IMR-90 (cell line): ENCODE measurements at regions of chr7 and their contacts with region 1.

Region 1: GRCh38 chr7:131654668-131655326 is 98.4 kb upstream of the PODXL start:
- DNase-seq: peak; percentile 72
- ATAC-seq: peak; percentile 100
- H3K4me3 ChIP-seq: no peak overlapping the region
- H3K27ac ChIP-seq: no peak overlapping the region
- H3K4me1 ChIP-seq: no peaks in the 10 kb centered on the region
- H3K27me3 ChIP-seq: peaks cover 2% of the 10 kb centered on the region; the same call in 1 of the 2 replicates
- CTCF ChIP-seq: peak; percentile 94
- POLR2A ChIP-seq: peak; percentile 47
- RAD21 ChIP-seq: peak; percentile 96

Region 2: DNA sequence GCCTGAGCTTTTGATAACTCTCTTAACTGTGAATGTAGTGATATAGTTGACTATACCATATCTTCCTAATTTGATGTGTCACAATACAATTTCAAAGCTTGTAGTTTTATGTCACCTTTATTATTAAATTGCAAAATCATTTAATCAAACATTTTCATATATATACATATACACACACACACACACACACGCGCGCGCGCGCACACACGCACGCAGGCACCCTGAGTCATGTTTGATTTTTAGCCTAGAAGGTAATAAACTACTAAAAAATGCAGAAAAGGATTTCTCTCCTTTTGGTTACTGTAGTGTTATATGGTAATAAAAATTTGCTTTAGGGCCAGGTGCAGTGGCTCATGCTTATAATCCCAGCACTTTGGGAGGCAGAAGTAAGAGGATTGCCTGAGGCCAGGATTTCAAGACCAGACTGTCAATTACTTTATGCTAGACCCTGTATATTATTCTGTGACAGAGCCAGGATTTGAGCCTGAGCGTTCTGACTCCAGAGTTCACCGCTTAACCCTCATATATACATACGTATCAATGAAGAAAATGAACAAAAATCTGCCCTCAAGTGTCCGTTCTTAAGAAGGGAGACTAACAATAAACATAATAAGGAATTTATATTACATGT is 187.9 kb before region 1 on chr7:
- CTCF ChIA-PET with region 1: no interaction called
- POLR2A ChIA-PET with region 1: no interaction called
- dilution Hi-C with region 1: no loop called
- in situ Hi-C with region 1: no loop called
- intact Hi-C with region 1: no loop called
- DNase-seq: no peak
- ATAC-seq: no peak
- H3K4me3 ChIP-seq: no peak overlapping the region
- H3K27ac ChIP-seq: no peak overlapping the region
- H3K4me1 ChIP-seq: no peaks in the 10 kb centered on the region
- H3K27me3 ChIP-seq: no peaks in the 10 kb centered on the region
- CTCF ChIP-seq: no peak
- POLR2A ChIP-seq: no peak
- RAD21 ChIP-seq: no peak

Region 3: DNA sequence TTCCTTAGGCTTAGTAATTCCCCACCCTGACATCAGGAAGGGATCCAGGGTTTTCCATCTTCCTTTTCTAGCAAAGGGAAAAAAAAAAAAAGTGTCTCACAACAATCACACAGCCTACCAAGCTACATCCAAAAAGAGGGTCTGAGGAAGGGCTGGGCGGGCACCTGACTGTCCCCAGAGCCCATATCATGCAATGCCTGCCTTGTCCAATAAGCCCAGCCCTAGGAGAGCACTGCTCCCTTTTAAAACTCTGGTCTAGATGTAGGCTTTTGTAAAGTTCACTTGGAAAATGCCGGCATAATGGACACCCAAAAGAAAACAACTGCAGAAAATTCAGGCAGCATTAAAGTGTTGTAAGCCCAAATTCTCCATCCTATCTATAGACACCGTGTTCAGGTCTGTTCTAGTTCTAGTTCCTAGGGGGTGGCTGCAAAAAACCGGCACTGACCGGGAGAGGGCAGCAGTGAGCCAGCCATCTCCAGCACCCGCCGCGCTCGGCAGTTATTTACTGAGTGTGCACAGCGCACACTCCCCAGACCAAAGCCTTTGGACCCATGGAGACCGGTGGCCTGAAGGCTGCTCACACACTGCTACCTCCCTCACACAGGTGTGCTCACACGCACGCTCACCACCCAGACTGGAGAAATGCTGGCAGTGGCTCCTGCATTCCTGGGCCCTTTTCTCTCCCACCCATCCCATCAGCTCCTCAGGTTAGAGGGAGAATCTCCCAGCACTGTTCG is 147.0 kb before region 1 on chr7:
- CTCF ChIA-PET with region 1: interaction called, 5 read pairs
- POLR2A ChIA-PET with region 1: no interaction called
- dilution Hi-C with region 1: no loop called
- in situ Hi-C with region 1: loop called (anchors 5 kb)
- intact Hi-C with region 1: loop called (anchors 1 kb)
- DNase-seq: peak; percentile 60
- ATAC-seq: peak; percentile 94
- H3K4me3 ChIP-seq: no peak overlapping the region
- H3K27ac ChIP-seq: no peak overlapping the region
- H3K4me1 ChIP-seq: peaks cover 7% of the 10 kb centered on the region
- H3K27me3 ChIP-seq: no peaks in the 10 kb centered on the region; the same call in 1 of the 2 replicates
- CTCF ChIP-seq: peak; percentile 93
- POLR2A ChIP-seq: no peak
- RAD21 ChIP-seq: peak; percentile 89

Region 4: GRCh38 chr7:131513245-131514061 is 141.3 kb before region 1 on chr7:
- CTCF ChIA-PET with region 1: interaction called, 5 read pairs
- POLR2A ChIA-PET with region 1: no interaction called
- dilution Hi-C with region 1: no loop called
- in situ Hi-C with region 1: loop called (anchors 5 kb)
- intact Hi-C with region 1: loop called (anchors 1 kb)
- DNase-seq: peak; percentile 81
- ATAC-seq: peak; percentile 99
- H3K4me3 ChIP-seq: no peak overlapping the region
- H3K27ac ChIP-seq: no peak overlapping the region
- H3K4me1 ChIP-seq: no peaks in the 10 kb centered on the region
- H3K27me3 ChIP-seq: no peaks in the 10 kb centered on the region; the same call in 1 of the 2 replicates
- CTCF ChIP-seq: peak; percentile 95
- POLR2A ChIP-seq: no peak
- RAD21 ChIP-seq: peak; percentile 81

Region 5: DNA sequence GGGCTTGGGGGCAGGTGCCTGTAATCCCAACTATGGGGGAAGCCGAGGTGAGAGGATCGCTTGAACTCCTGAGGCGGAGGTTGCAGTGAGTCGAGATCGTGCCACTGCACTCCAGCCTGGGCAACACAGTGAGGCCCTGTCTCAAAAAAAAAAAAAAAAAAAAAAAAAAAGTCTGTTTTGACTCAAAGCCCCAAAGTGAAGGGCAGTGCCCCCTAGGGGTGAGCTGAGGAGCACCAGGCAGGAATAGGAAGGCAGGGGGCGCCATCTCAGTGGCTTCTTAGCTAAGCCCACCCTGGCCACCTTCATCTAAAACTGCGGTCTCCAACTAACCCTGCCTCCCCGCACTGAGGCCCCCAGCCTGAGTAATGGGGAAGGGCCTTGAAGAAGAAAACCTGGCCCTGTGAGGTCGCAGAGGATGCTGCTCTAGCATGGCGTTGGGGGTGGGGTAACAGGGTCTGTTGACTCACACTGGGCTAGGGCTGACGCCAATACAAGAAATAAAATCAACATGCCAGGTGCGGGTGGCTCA is 108.2 kb before region 1 on chr7:
- CTCF ChIA-PET with region 1: interaction called, 6 read pairs
- POLR2A ChIA-PET with region 1: no interaction called
- dilution Hi-C with region 1: no loop called
- in situ Hi-C with region 1: loop called (anchors 10 kb)
- intact Hi-C with region 1: no loop called
- DNase-seq: no peak
- ATAC-seq: no peak
- H3K4me3 ChIP-seq: no peak overlapping the region
- H3K27ac ChIP-seq: no peak overlapping the region
- H3K4me1 ChIP-seq: no peaks in the 10 kb centered on the region
- H3K27me3 ChIP-seq: peaks cover 2% of the 10 kb centered on the region; the same call in 1 of the 2 replicates
- CTCF ChIP-seq: peak; percentile 79
- POLR2A ChIP-seq: no peak
- RAD21 ChIP-seq: peak; percentile 38

Region 6: DNA sequence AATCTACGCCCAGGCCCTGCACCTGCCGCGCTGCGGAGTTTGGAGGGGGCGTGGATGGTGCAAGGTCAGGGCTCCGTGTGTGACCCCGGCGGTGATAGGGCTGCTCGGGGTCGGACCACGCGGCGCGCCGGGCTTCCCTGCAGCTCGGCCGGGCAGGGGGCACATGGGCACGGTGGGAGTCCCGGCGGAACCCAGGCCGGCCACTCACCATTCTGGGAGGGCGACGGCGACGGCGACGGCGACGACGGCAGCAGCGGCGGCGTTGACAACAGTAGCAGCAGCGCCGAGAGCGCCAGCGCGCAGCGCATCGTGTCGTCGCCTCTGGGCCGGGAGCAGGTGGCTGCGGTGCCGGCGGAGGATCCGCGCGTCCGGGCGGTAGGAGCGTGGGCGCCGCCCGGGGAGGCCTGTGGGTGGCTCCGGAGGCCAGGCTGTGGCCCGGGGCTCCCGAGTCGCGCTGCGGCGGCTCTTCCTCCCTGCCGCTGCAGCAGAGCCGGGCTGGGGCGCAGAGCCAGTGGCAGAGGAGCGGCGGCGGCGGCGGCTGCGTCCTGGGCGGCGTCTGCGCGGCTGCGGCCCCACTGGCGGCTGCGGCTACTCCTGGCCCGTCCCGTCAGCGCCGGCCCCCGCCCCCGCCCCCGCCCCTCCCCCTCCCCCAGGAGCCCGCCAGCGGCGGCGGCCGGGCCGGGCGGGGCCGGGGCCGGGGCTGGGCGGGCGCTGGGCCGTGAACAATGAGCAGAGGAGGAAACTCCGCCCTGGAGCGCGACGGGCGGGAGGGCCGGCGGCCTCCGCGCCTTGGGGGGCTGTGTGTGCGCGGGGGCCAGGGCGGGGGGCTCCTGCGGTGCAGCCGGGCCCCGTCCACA is 98.5 kb before region 1 on chr7 and contains the start of gene PODXL:
- CTCF ChIA-PET with region 1: no interaction called
- POLR2A ChIA-PET with region 1: no interaction called
- dilution Hi-C with region 1: no loop called
- in situ Hi-C with region 1: no loop called
- intact Hi-C with region 1: loop called (anchors 2 kb)
- DNase-seq: peak; percentile 17
- ATAC-seq: peak; percentile 91
- H3K4me3 ChIP-seq: peak within 1 kb of the TSS; percentile 65
- H3K27ac ChIP-seq: no peak within 1 kb of the TSS
- H3K4me1 ChIP-seq: 0 out of 2 replicates have a peak, but pooled peaks cover 4% of the 10 kb centered on the region
- H3K27me3 ChIP-seq: peaks cover 33% of the 10 kb centered on the region; the same call in 1 of the 2 replicates
- CTCF ChIP-seq: no peak
- POLR2A ChIP-seq: no peak
- RAD21 ChIP-seq: no peak
- total RNA-seq, gene PODXL: 1.3 and 1.4 TPM in 2 replicates

Region 7: GRCh38 chr7:131878777-131879176 is 224.0 kb after region 1 on chr7:
- CTCF ChIA-PET with region 1: no interaction called
- POLR2A ChIA-PET with region 1: no interaction called
- dilution Hi-C with region 1: no loop called
- in situ Hi-C with region 1: no loop called
- intact Hi-C with region 1: no loop called
- DNase-seq: no peak
- ATAC-seq: no peak
- H3K4me3 ChIP-seq: no peak overlapping the region
- H3K27ac ChIP-seq: no peak overlapping the region
- H3K4me1 ChIP-seq: no peaks in the 10 kb centered on the region
- H3K27me3 ChIP-seq: no peaks in the 10 kb centered on the region
- CTCF ChIP-seq: no peak
- POLR2A ChIP-seq: no peak
- RAD21 ChIP-seq: no peak